Heart right ventricle (tissue), 16 donors: ENCODE measurements at regions of chr7 and their contacts with region 1.

Region 1: DNA sequence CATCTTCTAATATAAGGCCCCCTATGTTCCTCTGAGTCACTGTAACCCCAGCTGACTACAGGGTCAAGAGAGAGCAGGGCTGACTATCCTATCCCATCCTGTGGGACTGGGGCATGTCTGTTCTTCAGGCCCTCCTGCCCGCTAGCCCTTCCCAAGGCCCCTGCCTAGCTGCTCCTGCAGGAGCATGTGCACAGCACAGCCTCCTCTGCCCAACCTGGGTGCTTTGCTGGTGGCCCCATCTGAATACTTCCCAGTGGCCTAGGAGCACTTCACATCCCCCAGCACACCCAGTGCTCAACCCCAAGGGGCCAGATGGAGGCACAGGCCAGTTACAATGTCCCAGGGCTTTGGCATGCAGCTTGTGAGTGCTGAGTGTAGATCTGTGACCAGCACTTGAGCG is 37.3 kb downstream of the AGBL3 start:
- DNase-seq: no peak
- ATAC-seq: no peak
- H3K4me3 ChIP-seq: no peak overlapping the region
- H3K27ac ChIP-seq: no peak overlapping the region
- H3K4me1 ChIP-seq: no peaks in the 10 kb centered on the region
- H3K27me3 ChIP-seq: no peaks in the 10 kb centered on the region
- CTCF ChIP-seq: no peak

Region 2: DNA sequence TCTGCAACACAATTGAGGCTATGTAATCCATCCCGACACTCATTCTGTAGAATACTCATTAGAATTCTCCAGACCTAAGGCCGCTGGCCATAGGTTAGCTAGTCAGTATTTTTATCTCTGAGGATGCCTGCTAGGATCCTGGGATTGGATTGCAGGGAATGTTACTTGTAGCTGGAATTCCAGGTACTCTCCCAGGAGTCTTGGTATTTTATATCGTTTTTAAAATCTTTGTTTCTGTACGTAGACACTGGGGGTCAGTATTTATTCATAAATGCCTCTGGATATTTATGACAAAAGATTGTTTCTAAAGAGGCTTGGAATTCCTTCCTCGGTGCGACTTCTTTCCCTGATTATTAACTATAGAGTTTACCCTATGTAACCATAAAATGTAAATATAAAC is 336.8 kb before region 1 on chr7:
- intact Hi-C with region 1: no loop called
- DNase-seq: no peak
- ATAC-seq: no peak
- H3K4me3 ChIP-seq: no peak overlapping the region
- H3K27ac ChIP-seq: no peak overlapping the region
- H3K4me1 ChIP-seq: peaks cover 0 to 29% (median 10%) of the 10 kb centered on the region in 9 donors
- H3K27me3 ChIP-seq: no peaks in the 10 kb centered on the region
- CTCF ChIP-seq: peak; percentile 9 to 60 (median 39)

Region 3: DNA sequence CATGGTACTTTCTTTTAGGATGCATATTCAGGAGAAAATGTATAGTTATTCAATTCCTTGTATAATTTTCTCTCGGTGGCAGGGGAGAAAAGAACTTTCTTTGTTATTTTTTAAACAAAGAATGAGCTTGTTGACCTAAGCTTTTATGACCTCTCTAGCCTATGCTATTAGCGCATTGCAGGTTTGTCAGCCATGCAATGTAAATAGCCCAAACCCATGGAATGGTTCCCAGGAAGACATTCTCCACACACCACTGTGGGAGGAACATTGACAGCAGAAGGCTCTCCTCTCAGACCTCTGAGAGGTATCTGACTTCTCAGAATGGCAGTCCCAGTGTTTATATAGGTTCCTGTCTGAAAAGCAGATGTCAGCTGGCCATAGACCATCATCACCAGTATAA is 56.9 kb before region 1 on chr7:
- intact Hi-C with region 1: loop called in 1 of 10 experiments (anchors 1 kb)
- DNase-seq: no peak
- ATAC-seq: no peak
- H3K4me3 ChIP-seq: no peak overlapping the region
- H3K27ac ChIP-seq: no peak overlapping the region
- H3K4me1 ChIP-seq: peaks cover 0 to 12% (median 0%) of the 10 kb centered on the region in 9 donors
- H3K27me3 ChIP-seq: no peaks in the 10 kb centered on the region
- CTCF ChIP-seq: no peak